ENCODE measurements at regions of chr9 and their contacts with region 1.

Region 1: DNA sequence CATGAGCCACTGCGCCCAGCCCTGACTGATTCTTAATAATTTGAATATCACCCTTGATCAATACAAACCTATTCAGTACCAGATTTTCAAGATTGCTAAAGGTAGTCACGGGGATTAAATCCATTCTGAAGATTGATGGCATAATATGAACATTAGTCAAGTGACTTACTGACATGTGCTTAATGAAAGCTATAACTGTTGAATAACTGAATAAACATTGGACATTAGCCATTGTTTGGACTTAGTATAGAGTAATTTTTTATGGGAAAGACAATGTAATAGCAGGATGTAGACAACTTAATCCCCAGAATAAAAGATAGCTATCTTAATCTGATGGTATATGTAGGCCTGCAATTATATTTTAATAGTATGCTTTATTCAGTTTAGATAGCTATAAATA is 35.0 kb upstream of the VPS13A start:
- DNase-seq: no peak
- H3K4me3 ChIP-seq: no peak overlapping the region
- H3K27ac ChIP-seq: no peak overlapping the region
- H3K4me1 ChIP-seq: no peaks in the 10 kb centered on the region
- H3K27me3 ChIP-seq: peaks cover 0 to 8% (median 0%) of the 10 kb centered on the region in 4 donors
- CTCF ChIP-seq: no peak
- EP300 ChIP-seq: no peak
- POLR2A ChIP-seq: no peak

Region 2: GRCh38 chr9:76798527-76798926 is 343.8 kb before region 1 on chr9:
- intact Hi-C with region 1: loop called (anchors 10 kb)
- DNase-seq: no peak
- H3K4me3 ChIP-seq: no peak overlapping the region
- H3K27ac ChIP-seq: no peak overlapping the region
- H3K4me1 ChIP-seq: peaks cover 0 to 7% (median 2%) of the 10 kb centered on the region in 4 donors
- H3K27me3 ChIP-seq: no peaks in the 10 kb centered on the region
- CTCF ChIP-seq: no peak
- EP300 ChIP-seq: no peak
- POLR2A ChIP-seq: no peak